ENCODE measurements at regions of chr16 and their contacts with region 1.

Region 1: GRCh38 chr16:2033057-2033908 is 6.6 kb downstream of the NHERF2 start:
- DNase-seq: peak; percentile 37
- H3K4me3 ChIP-seq: no peak overlapping the region
- H3K27ac ChIP-seq: no peak overlapping the region
- H3K4me1 ChIP-seq: peaks cover 28% of the 10 kb centered on the region
- H3K27me3 ChIP-seq: no peaks in the 10 kb centered on the region
- CTCF ChIP-seq: no peak

Region 2: GRCh38 chr16:1470481-1471281 is 562.6 kb before region 1 on chr16:
- CTCF ChIA-PET with region 1: no interaction called
- dilution Hi-C with region 1: no loop called
- in situ Hi-C with region 1: no loop called
- intact Hi-C with region 1: no loop called
- DNase-seq: peak; percentile 22
- H3K4me3 ChIP-seq: no peak overlapping the region
- H3K27ac ChIP-seq: no peak overlapping the region
- H3K4me1 ChIP-seq: peaks cover 29% of the 10 kb centered on the region
- H3K27me3 ChIP-seq: no peaks in the 10 kb centered on the region
- CTCF ChIP-seq: no peak

Region 3: GRCh38 chr16:1923299-1924034 is 109.8 kb before region 1 on chr16:
- CTCF ChIA-PET with region 1: no interaction called
- dilution Hi-C with region 1: no loop called
- in situ Hi-C with region 1: no loop called
- intact Hi-C with region 1: no loop called
- DNase-seq: no peak
- H3K4me3 ChIP-seq: no peak overlapping the region
- H3K27ac ChIP-seq: no peak overlapping the region
- H3K4me1 ChIP-seq: no peaks in the 10 kb centered on the region
- H3K27me3 ChIP-seq: peaks cover 26% of the 10 kb centered on the region
- CTCF ChIP-seq: peak in 1 of 2 donors; percentile 7

Region 4: DNA sequence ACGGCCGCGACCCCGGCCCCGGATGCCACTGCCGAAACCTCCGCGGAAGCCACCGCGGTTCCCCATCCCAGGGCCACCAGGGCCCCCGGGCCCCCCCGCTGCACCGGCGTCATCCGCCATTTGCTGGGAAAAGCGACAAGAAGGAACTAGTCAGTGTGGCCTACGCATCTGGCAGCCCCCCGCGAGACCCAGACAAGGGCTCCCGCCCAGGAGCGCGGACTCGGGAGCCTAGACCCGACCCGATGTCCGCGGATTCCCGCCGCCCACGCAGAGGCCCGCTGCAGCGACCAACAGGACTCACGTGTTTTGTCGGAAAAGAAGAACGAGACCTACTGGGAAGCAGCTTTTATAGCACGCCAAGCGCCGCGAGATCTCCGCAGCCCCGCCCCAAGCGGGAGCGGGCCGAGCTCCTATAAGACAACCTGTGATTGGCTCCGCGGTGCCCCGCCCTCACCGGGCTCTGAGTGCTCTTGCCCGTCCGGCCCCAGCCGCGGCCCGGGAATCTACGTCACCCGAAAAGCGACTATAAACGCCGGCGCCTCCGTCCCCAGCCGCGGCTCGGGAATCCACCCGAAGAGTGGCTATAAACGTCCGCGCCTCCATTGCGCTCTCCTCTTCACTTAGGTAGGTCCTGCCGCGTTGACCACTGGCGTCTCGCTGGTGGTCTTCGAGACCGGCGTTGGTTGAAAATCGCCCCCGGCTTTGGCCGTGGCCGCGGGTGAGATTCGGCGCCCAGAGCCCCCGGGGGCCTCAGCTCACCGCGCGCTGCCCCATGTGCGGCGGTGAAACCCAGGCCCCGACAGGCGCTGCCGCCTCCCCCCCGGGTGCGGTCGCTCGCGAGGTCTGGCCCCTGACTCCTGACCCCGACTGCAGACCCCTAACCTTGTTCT is 68.5 kb before region 1 on chr16 and contains the start of gene RPS2:
- CTCF ChIA-PET with region 1: no interaction called
- dilution Hi-C with region 1: loop called (anchors 5 kb)
- in situ Hi-C with region 1: no loop called
- intact Hi-C with region 1: no loop called
- DNase-seq: peak; percentile 96
- H3K4me3 ChIP-seq: peak within 1 kb of the TSS; percentile 59 to 98 (median 94)
- H3K27ac ChIP-seq: peak within 1 kb of the TSS; percentile 87
- H3K4me1 ChIP-seq: peaks cover 16% of the 10 kb centered on the region
- H3K27me3 ChIP-seq: no peaks in the 10 kb centered on the region
- CTCF ChIP-seq: no peak
- total RNA-seq, gene RPS2: 1,442 to 3,060 TPM

Region 5: DNA sequence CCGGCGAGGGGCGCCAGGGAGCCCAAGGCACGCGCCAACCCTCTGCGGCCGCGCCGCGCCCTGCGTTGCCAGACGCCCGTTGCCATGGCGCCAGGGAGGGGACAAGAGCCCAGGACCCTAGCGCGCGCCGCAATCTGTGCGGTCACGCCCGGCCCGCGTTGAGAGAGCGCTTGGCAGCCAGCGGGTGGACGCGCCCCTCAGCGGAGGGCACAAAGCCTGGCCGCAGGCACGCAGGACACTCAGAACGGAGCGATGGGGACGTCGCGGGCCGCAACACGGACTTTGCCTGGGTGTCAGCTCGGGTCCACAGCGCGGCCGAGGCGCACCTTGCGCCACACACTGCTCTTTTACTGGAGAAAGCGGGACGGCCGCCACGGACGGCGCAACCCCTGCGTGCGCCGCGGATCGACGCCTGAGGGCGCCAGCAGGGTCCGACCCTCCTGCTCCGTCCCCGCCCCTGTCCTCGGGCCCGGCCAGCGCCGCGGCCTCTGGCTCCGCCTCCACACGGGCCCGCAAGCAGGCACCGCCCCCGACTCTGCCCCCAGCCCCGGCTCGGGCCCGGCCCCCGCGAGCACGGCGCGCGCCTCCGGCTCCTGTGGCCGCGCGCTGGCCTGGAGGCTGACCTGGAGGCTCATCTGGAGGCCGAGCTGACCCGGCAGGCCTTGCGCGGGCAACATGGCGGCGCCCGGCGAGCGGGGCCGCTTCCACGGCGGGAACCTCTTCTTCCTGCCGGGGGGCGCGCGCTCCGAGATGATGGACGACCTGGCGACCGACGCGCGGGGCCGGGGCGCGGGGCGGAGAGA is 49.5 kb before region 1 on chr16 and contains the start of gene GFER:
- CTCF ChIA-PET with region 1: no interaction called
- dilution Hi-C with region 1: no loop called
- in situ Hi-C with region 1: no loop called
- intact Hi-C with region 1: no loop called
- DNase-seq: peak; percentile 82
- H3K4me3 ChIP-seq: peak within 1 kb of the TSS; percentile 56 to 76 (median 69)
- H3K27ac ChIP-seq: no peak within 1 kb of the TSS
- H3K4me1 ChIP-seq: peaks cover 42% of the 10 kb centered on the region
- H3K27me3 ChIP-seq: no peaks in the 10 kb centered on the region
- CTCF ChIP-seq: peak in 1 of 2 donors; percentile 25
- total RNA-seq, gene GFER: 6.5 to 30.7 TPM

Region 6: GRCh38 chr16:2047330-2048115 is 14.2 kb after region 1 on chr16 and contains the starts of genes NTHL1 and TSC2:
- CTCF ChIA-PET with region 1: no interaction called
- dilution Hi-C with region 1: no loop called
- in situ Hi-C with region 1: no loop called
- intact Hi-C with region 1: loop called (anchors 2 kb)
- DNase-seq: peak; percentile 93
- H3K4me3 ChIP-seq: peak within 1 kb of the TSS; percentile 63 to 90 (median 66)
- H3K27ac ChIP-seq: no peak within 1 kb of the TSS
- H3K4me1 ChIP-seq: peaks cover 19% of the 10 kb centered on the region
- H3K27me3 ChIP-seq: no peaks in the 10 kb centered on the region
- CTCF ChIP-seq: peak in 1 of 2 donors; percentile 48
- total RNA-seq, gene NTHL1: 11.3 to 23.2 TPM
- total RNA-seq, gene TSC2: 56.2 to 92.0 TPM

Region 7: DNA sequence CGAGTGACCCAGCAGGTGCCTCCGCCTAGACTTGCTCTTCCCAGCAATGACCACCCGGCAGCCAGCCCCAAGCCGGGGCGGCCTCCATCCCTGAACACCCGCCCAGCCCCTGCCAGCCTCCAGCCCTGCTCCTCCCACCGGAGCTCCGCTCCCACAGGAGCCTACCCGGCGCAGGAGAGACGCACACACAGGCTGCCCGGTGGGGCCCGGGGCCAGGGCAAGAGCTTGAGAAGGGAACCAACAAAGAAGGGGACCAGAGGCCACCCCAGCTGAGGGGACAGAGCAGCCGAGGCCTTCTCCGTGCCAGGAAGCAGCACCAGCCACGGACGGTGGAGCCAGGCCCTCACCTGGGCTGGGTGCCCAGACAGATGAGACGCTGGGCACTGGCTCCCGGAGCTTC is 88.6 kb after region 1 on chr16:
- CTCF ChIA-PET with region 1: no interaction called
- dilution Hi-C with region 1: no loop called
- in situ Hi-C with region 1: no loop called
- intact Hi-C with region 1: no loop called
- DNase-seq: peak; percentile 40
- H3K4me3 ChIP-seq: peak overlapping the region in 2 of 3 experiments; percentile 10 to 34
- H3K27ac ChIP-seq: peak overlapping the region; percentile 15
- H3K4me1 ChIP-seq: peaks cover 53% of the 10 kb centered on the region
- H3K27me3 ChIP-seq: no peaks in the 10 kb centered on the region
- CTCF ChIP-seq: no peak

Region 8: GRCh38 chr16:2147981-2148671 is 114.8 kb after region 1 on chr16 and contains the start of gene RAB26:
- CTCF ChIA-PET with region 1: no interaction called
- dilution Hi-C with region 1: loop called (anchors 5 kb)
- in situ Hi-C with region 1: loop called in 1 of 2 experiments (anchors 10 kb)
- intact Hi-C with region 1: no loop called
- DNase-seq: peak; percentile 70
- H3K4me3 ChIP-seq: peak within 1 kb of the TSS in 2 of 3 experiments; percentile 32 to 36
- H3K27ac ChIP-seq: no peak within 1 kb of the TSS
- H3K4me1 ChIP-seq: peaks cover 58% of the 10 kb centered on the region
- H3K27me3 ChIP-seq: no peaks in the 10 kb centered on the region
- CTCF ChIP-seq: no peak
- total RNA-seq, gene RAB26: 0.33 to 1.0 TPM

Region 9: GRCh38 chr16:2244245-2244691 is 211.0 kb after region 1 on chr16:
- CTCF ChIA-PET with region 1: no interaction called
- dilution Hi-C with region 1: loop called (anchors 5 kb)
- in situ Hi-C with region 1: no loop called
- intact Hi-C with region 1: no loop called
- DNase-seq: peak; percentile 50
- H3K4me3 ChIP-seq: no peak overlapping the region
- H3K27ac ChIP-seq: no peak overlapping the region
- H3K4me1 ChIP-seq: peaks cover 10% of the 10 kb centered on the region
- H3K27me3 ChIP-seq: no peaks in the 10 kb centered on the region
- CTCF ChIP-seq: no peak

Region 10: DNA sequence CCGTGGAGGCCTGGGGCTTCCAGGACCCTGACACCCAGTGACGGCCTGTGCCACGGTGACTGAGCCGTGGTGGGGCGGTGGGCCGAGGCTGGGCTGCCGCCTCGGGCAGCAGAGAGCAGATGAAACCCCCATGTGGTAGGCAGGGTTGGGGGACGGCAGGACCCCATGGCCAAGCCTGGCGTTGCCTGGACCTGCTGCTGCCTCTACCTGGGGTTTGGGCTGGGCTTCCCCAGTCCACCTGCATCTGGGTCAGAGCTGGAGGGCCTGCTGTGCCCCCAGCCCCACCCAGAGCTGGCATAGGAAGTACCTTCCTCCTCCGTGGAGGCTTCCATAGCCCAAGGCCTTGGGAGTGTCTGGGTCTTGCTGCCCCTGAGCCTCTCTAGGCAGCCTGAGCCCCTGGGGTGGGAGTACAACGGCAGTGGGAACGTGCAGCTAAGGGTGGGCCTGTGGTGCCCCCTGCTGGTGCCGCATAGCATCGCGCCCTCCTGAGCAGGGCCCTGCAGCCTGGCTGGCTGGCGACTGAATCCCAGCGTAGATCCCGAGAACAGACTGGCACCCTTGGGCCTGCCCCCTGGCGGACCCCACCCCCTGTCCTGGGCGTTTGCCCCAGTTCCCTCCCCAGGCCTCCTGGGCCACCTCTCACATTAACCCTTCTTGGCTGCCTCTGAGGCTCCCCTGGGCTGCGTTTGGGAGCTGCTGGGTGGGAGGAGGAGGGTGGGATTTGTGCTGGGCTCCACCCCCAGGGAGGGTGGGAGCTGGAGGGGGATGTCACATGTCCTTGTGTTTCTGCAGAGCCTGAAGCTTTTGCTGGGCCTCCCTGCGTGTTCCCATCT is 467.9 kb after region 1 on chr16:
- CTCF ChIA-PET with region 1: no interaction called
- dilution Hi-C with region 1: loop called (anchors 10 kb)
- in situ Hi-C with region 1: no loop called
- intact Hi-C with region 1: no loop called
- DNase-seq: peak; percentile 49
- H3K4me3 ChIP-seq: no peak overlapping the region
- H3K27ac ChIP-seq: no peak overlapping the region
- H3K4me1 ChIP-seq: peaks cover 5% of the 10 kb centered on the region
- H3K27me3 ChIP-seq: no peaks in the 10 kb centered on the region
- CTCF ChIP-seq: peak; percentile 84 to 95

Measured in mammary epithelial cell (primary cell).